Head of caudate nucleus (tissue), 42 donors: ENCODE measurements at regions of chr10 and their contacts with region 1.

Region 1: GRCh38 chr10:67858971-67859370 is 21.0 kb upstream of the DNAJC12 start:
- DNase-seq: no peak

Region 2: GRCh38 chr10:67936416-67936815 is 77.4 kb after region 1 on chr10:
- intact Hi-C with region 1: no loop called
- DNase-seq: no peak

Region 3: GRCh38 chr10:68032113-68032512 is 173.1 kb after region 1 on chr10:
- intact Hi-C with region 1: no loop called
- DNase-seq: no peak

Region 4: GRCh38 chr10:68156373-68157185 is 297.6 kb after region 1 on chr10:
- intact Hi-C with region 1: loop called (anchors 5 kb)
- DNase-seq: peak in 37 of 42 donors; percentile 31 to 91 (median 68)